H1 (cell line): ENCODE measurements at regions of chr17 and their contacts with region 1.

Region 1: DNA sequence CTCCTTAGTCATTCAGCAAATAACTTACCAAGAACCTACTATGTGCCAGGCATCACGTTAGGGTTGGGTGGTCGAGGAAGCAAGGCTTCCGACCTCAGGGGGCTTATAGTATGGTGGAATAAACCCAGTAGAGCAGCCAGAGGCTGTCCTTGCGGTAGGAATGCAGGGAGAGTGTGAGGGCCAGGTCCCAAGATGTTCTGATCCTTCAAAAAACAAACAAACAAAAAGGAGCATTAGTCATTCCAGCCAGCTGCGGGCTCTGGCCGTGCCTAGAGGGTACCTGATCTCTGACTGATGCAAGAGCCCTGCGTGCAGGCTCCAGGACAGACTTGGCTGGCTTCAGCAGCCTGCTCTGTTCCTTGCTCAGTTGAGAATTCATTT is 18.2 kb downstream of the CYB5D2 start:
- DNase-seq: peak in 1 of 2 experiments; percentile 50
- H3K4me3 ChIP-seq: no peak overlapping the region
- H3K27ac ChIP-seq: no peak overlapping the region
- H3K4me1 ChIP-seq: peaks cover 0 to 6% (median 2%) of the 10 kb centered on the region in 4 experiments; a peak in 4 of 7 replicates
- H3K27me3 ChIP-seq: no peaks in the 10 kb centered on the region; a peak in 1 of 7 replicates
- CTCF ChIP-seq: no peak
- EP300 ChIP-seq: no peak
- POLR2A ChIP-seq: no peak
- RAD21 ChIP-seq: no peak

Region 2: GRCh38 chr17:3893003-3893719 is 268.0 kb before region 1 on chr17 and contains the start of gene CAMKK1:
- CTCF ChIA-PET with region 1: no interaction called
- POLR2A ChIA-PET with region 1: no interaction called
- DNase-seq: peak; percentile 44 to 92
- H3K4me3 ChIP-seq: peak within 1 kb of the TSS; percentile 52 to 82 (median 63)
- H3K27ac ChIP-seq: no peak within 1 kb of the TSS; the same call in 1 of the 2 replicates
- H3K4me1 ChIP-seq: peaks cover 6 to 31% (median 21%) of the 10 kb centered on the region in 4 experiments
- H3K27me3 ChIP-seq: peaks cover 0 to 6% (median 1%) of the 10 kb centered on the region in 4 experiments; a peak in 3 of 7 replicates
- CTCF ChIP-seq: no peak
- EP300 ChIP-seq: no peak
- POLR2A ChIP-seq: peak in 1 of 2 experiments; percentile 67; a peak in 2 of 3 replicates
- RAD21 ChIP-seq: no peak
- total RNA-seq, gene CAMKK1: 7.6 and 8.5 TPM in 2 replicates

Region 3: GRCh38 chr17:4143563-4144421 is 17.4 kb before region 1 on chr17:
- CTCF ChIA-PET with region 1: interaction called, 17 read pairs
- POLR2A ChIA-PET with region 1: interaction called, 117 read pairs
- DNase-seq: peak; percentile 75 to 88
- H3K4me3 ChIP-seq: peak overlapping the region; percentile 50 to 94 (median 90)
- H3K27ac ChIP-seq: peak overlapping the region; percentile 92
- H3K4me1 ChIP-seq: peaks cover 0 to 4% (median 1%) of the 10 kb centered on the region in 4 experiments; a peak in 2 of 7 replicates
- H3K27me3 ChIP-seq: no peaks in the 10 kb centered on the region
- CTCF ChIP-seq: no peak
- EP300 ChIP-seq: no peak
- POLR2A ChIP-seq: peak; percentile 83 to 97
- RAD21 ChIP-seq: no peak

Region 4: DNA sequence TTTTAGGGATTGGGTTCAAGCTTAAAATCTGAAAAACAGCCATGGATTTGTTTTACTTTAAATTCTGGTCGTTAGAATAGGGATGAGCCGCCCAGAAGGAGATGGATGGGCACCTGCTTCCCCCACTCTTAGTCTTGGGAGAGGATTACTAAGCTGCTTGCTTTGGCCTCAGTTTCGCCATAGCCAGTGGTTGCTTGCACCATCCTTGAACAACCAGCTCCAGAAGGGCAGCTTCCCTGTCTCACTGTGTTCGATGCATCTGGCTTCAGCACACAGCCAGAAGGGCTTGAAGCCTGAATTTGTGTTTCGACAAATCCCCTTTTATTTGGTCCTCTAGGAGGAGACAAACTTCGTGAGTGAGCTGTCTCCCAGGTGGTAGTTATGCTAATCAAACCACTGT is 11.1 kb before region 1 on chr17:
- CTCF ChIA-PET with region 1: interaction called, 17 read pairs
- POLR2A ChIA-PET with region 1: interaction called, 117 read pairs
- DNase-seq: no peak
- H3K4me3 ChIP-seq: no peak overlapping the region
- H3K27ac ChIP-seq: no peak overlapping the region
- H3K4me1 ChIP-seq: no peaks in the 10 kb centered on the region
- H3K27me3 ChIP-seq: no peaks in the 10 kb centered on the region
- CTCF ChIP-seq: peak in 2 of 3 experiments; percentile 9 to 22; a peak in 2 of 4 replicates
- EP300 ChIP-seq: no peak
- POLR2A ChIP-seq: no peak
- RAD21 ChIP-seq: peak; percentile 28 to 34; a peak in 3 of 4 replicates

Region 5: GRCh38 chr17:4412933-4413831 is 252.0 kb after region 1 on chr17:
- CTCF ChIA-PET with region 1: interaction called, 12 read pairs
- POLR2A ChIA-PET with region 1: interaction called, 3 read pairs
- DNase-seq: peak; percentile 91 to 99
- H3K4me3 ChIP-seq: no peak overlapping the region
- H3K27ac ChIP-seq: no peak overlapping the region
- H3K4me1 ChIP-seq: peaks cover 0 to 4% (median 2%) of the 10 kb centered on the region in 4 experiments; a peak in 4 of 7 replicates
- H3K27me3 ChIP-seq: no peaks in the 10 kb centered on the region
- CTCF ChIP-seq: peak; percentile 87 to 99 (median 99)
- EP300 ChIP-seq: peak in 1 of 2 experiments; percentile 51; a peak in 1 of 3 replicates
- POLR2A ChIP-seq: no peak
- RAD21 ChIP-seq: peak; percentile 99 to 100